ENCODE measurements at regions of chr11 and their contacts with region 1.

Region 1: DNA sequence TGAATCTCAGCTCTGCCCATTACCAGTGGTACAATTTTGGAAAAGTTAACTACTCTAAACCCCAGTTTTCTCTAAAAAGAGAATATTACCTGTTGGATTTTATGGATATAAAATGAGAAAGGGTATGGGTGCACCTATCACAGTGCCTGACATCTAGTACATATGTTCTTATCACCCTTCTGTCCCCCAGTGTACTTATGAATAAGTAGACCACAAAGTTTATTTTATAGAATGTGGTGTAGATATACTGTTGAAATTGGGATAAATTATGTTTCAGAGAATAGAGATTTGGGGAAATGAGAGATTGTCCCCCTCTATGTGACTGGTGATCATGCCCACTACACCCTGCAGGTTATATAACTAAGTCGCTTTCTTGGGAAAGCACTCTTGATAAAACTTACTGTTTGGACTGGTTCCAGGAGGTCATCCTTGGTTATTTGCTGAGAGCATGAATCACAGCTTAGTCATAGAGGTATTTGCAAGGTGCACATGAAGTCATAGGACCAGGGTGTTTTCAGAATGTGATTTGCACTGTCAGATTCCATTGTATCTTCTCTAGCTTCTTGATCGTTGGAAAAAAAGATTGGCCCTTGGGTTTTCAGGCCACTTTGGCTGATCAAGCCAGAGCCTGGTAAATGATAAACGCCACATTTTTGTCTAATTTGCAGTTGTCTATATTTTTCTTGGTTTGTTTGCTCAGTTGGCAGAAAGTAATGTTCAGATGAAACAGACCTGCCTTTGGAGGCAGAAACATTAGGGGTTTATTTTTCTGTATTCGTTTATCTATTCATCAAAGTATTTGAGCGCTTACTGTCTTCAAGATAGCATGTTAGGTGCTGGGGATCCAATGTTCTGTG is 21.3 kb downstream of the STX3 start:
- DNase-seq: peak; percentile 68 to 79
- H3K4me3 ChIP-seq: no peak overlapping the region
- H3K4me3 Mint-ChIP-seq: peak overlapping the region; percentile 66
- H3K27ac Mint-ChIP-seq: peak overlapping the region; percentile 74
- H3K4me1 ChIP-seq: peaks cover 65% of the 10 kb centered on the region
- H3K4me1 Mint-ChIP-seq: peaks cover 57% of the 10 kb centered on the region
- H3K27me3 ChIP-seq: no peaks in the 10 kb centered on the region
- H3K27me3 Mint-ChIP-seq: no peaks in the 10 kb centered on the region
- CTCF ChIP-seq: no peak

Region 2: DNA sequence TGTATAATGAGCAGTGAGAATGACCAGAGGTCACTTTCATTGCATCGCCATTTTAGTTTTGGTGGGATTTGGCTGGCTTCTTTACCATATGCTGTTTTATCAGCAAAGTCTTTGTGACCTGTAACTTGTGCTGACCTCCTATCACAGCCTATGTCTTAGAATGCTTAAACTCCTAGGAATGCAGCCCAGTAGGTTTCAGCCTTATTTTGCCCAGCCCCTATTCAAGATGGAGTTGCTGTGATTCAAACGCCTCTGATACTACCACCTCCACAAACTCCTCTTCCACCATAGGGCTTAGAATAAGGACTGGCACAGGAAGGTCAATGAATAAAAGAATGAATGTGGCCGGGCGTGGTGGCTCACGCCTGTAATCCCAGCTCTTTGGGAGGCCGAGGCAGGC is 42.8 kb before region 1 on chr11:
- CTCF ChIA-PET with region 1: no interaction called
- POLR2A ChIA-PET with region 1: no interaction called
- intact Hi-C with region 1: no loop called
- DNase-seq: peak; percentile 26 to 40
- H3K4me3 ChIP-seq: no peak overlapping the region
- H3K4me3 Mint-ChIP-seq: no peak overlapping the region
- H3K27ac Mint-ChIP-seq: peak overlapping the region; percentile 67
- H3K4me1 ChIP-seq: peaks cover 42% of the 10 kb centered on the region
- H3K4me1 Mint-ChIP-seq: peaks cover 16% of the 10 kb centered on the region
- H3K27me3 ChIP-seq: no peaks in the 10 kb centered on the region
- H3K27me3 Mint-ChIP-seq: no peaks in the 10 kb centered on the region
- CTCF ChIP-seq: no peak

Region 3: GRCh38 chr11:59787816-59788215 is 11.4 kb after region 1 on chr11:
- CTCF ChIA-PET with region 1: no interaction called
- POLR2A ChIA-PET with region 1: no interaction called
- intact Hi-C with region 1: loop called (anchors 1 kb)
- DNase-seq: no peak
- H3K4me3 ChIP-seq: no peak overlapping the region
- H3K4me3 Mint-ChIP-seq: no peak overlapping the region
- H3K27ac Mint-ChIP-seq: peak overlapping the region; percentile 39
- H3K4me1 ChIP-seq: peaks cover 20% of the 10 kb centered on the region
- H3K4me1 Mint-ChIP-seq: peaks cover 35% of the 10 kb centered on the region
- H3K27me3 ChIP-seq: no peaks in the 10 kb centered on the region
- H3K27me3 Mint-ChIP-seq: no peaks in the 10 kb centered on the region
- CTCF ChIP-seq: no peak

Region 4: DNA sequence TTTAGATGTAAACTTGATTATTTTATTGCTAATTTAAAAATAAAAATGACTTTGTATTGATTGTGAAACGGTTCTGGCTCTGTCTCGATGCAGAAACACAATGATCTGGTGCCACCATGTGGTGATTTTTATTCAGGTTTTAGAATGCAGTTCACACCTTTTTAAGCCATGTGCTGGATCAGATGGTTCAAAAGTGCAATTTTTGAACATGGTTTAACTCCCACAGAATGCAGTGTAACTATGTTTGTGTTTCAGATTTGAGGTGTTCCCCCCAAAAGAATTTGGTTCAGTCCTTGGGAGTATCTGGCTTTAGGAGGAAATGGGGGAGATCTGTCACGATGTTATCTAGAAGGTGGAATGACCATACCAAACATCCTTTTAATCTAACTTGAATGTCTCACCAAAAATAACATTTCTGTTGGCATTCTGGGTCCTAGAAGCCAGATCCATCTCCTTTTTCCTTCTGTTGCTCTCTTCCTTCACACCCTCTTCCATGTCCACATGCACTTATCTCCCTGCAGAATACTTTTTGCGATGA is 26.3 kb after region 1 on chr11:
- CTCF ChIA-PET with region 1: no interaction called
- POLR2A ChIA-PET with region 1: no interaction called
- intact Hi-C with region 1: loop called (anchors 2 kb)
- DNase-seq: peak in 1 of 2 experiments; percentile 68
- H3K4me3 ChIP-seq: no peak overlapping the region
- H3K4me3 Mint-ChIP-seq: no peak overlapping the region
- H3K27ac Mint-ChIP-seq: no peak overlapping the region
- H3K4me1 ChIP-seq: 0 out of 2 replicates have a peak, but pooled peaks cover 9% of the 10 kb centered on the region
- H3K4me1 Mint-ChIP-seq: peaks cover 19% of the 10 kb centered on the region
- H3K27me3 ChIP-seq: no peaks in the 10 kb centered on the region
- H3K27me3 Mint-ChIP-seq: no peaks in the 10 kb centered on the region
- CTCF ChIP-seq: peak; percentile 60 to 68

Measured in Caco-2 (cell line).